ENCODE measurements at regions of chr7 and their contacts with region 1.

Region 1: GRCh38 chr7:12490117-12490688 is 80.3 kb upstream of the SCIN start:
- DNase-seq: no peak
- ATAC-seq: no peak
- H3K4me3 Mint-ChIP-seq: no peak overlapping the region
- H3K27ac Mint-ChIP-seq: no peak overlapping the region
- H3K4me1 Mint-ChIP-seq: no peaks in the 10 kb centered on the region
- H3K27me3 Mint-ChIP-seq: peaks cover 12% of the 10 kb centered on the region

Region 2: GRCh38 chr7:12434009-12434642 is 56.1 kb before region 1 on chr7:
- CTCF ChIA-PET with region 1: interaction called, 13 read pairs
- DNase-seq: no peak
- ATAC-seq: no peak
- H3K4me3 Mint-ChIP-seq: no peak overlapping the region
- H3K27ac Mint-ChIP-seq: no peak overlapping the region
- H3K4me1 Mint-ChIP-seq: no peaks in the 10 kb centered on the region
- H3K27me3 Mint-ChIP-seq: peaks cover 2% of the 10 kb centered on the region

Region 3: GRCh38 chr7:12458520-12459131 is 31.6 kb before region 1 on chr7:
- CTCF ChIA-PET with region 1: interaction called, 34 read pairs
- DNase-seq: no peak
- ATAC-seq: peak; percentile 71
- H3K4me3 Mint-ChIP-seq: no peak overlapping the region
- H3K27ac Mint-ChIP-seq: no peak overlapping the region
- H3K4me1 Mint-ChIP-seq: no peaks in the 10 kb centered on the region
- H3K27me3 Mint-ChIP-seq: peaks cover 9% of the 10 kb centered on the region

Measured in activated CD8-positive, alpha-beta memory T cell treated with anti-CD3 and anti-CD28 coated beads, Interleukin-2, amount 10 ng/mL, durations not matched to agents 7 days and 5 days (primary cell).